ENCODE measurements at regions of chr6 and their contacts with region 1.

Region 1: GRCh38 chr6:2646346-2646745 is 104.4 kb downstream of the MYLK4 start:
- DNase-seq: no peak
- ATAC-seq: no peak
- H3K4me3 ChIP-seq: no peak overlapping the region
- H3K27ac ChIP-seq: no peak overlapping the region
- H3K4me1 ChIP-seq: peaks cover 2% of the 10 kb centered on the region; the same call in 1 of the 2 replicates
- H3K27me3 ChIP-seq: peaks cover 4 to 8% of the 10 kb centered on the region in 2 experiments; a peak in 3 of 4 replicates
- CTCF ChIP-seq: no peak
- EP300 ChIP-seq: no peak
- POLR2A ChIP-seq: no peak
- RAD21 ChIP-seq: no peak

Region 2: DNA sequence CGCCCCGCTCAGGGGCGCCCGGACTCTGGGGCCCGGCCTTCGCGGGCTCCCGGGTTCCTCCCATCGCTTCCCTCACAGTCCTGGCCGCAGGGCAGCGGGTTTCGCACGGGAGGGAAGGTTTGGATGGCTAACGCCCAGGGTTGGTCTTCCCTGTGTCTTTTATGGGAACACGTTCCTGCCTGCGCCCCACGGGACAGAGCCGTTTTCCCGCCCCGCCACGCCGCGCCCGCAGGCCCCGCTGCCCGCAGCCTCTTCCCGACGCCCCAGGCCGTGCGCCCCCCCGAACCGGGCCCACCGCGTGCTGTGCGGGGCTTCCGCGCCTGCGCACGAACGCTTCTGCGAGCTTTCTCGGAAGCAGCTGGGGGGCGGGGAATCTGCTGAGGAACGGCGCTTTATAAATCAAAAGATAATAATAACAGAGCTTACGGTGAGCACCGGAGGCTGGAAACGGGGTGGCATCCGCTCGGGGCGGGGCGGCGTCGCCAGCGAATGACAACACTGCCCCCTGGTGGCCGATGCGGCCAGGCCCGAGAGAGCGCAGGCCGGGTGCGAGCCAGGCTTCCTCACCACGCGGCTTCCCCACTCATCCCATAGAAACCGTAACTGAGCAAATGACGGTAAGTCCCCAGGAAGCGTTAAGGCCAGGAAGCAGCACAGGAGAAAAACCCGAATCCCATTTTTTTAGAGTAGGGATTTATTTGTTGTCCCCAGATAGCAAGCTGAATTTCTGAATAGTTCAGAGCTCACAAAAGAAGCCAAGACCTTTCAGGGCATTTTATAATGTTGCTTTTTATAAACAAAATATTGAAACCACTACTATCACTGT is 12.0 kb before region 1 on chr6:
- CTCF ChIA-PET with region 1: interaction called, 16 read pairs
- POLR2A ChIA-PET with region 1: no interaction called
- RAD21 ChIA-PET with region 1: interaction called, 6 read pairs
- SMC1A ChIA-PET with region 1: interaction called, 4 read pairs
- in situ Hi-C with region 1: no loop called
- intact Hi-C with region 1: no loop called
- DNase-seq: no peak
- ATAC-seq: peak; percentile 99
- H3K4me3 ChIP-seq: 0 out of 2 replicates have a peak overlapping the region, but pooled peaks have one; percentile 44
- H3K27ac ChIP-seq: no peak overlapping the region
- H3K4me1 ChIP-seq: no peaks in the 10 kb centered on the region
- H3K27me3 ChIP-seq: peaks cover 0 to 1% of the 10 kb centered on the region in 2 experiments; a peak in 2 of 4 replicates
- CTCF ChIP-seq: peak; percentile 88 to 94 (median 90)
- EP300 ChIP-seq: no peak
- POLR2A ChIP-seq: no peak
- RAD21 ChIP-seq: peak; percentile 76

Region 3: GRCh38 chr6:3176562-3177355 is 530.4 kb after region 1 on chr6:
- CTCF ChIA-PET with region 1: no interaction called
- POLR2A ChIA-PET with region 1: no interaction called
- RAD21 ChIA-PET with region 1: no interaction called
- SMC1A ChIA-PET with region 1: no interaction called
- in situ Hi-C with region 1: no loop called
- intact Hi-C with region 1: no loop called
- DNase-seq: no peak
- ATAC-seq: peak; percentile 38
- H3K4me3 ChIP-seq: no peak overlapping the region
- H3K27ac ChIP-seq: no peak overlapping the region
- H3K4me1 ChIP-seq: no peaks in the 10 kb centered on the region
- H3K27me3 ChIP-seq: no peaks in the 10 kb centered on the region
- CTCF ChIP-seq: no peak
- EP300 ChIP-seq: no peak
- POLR2A ChIP-seq: no peak
- RAD21 ChIP-seq: no peak